ENCODE measurements at regions of chr3 and their contacts with region 1.

Region 1: DNA sequence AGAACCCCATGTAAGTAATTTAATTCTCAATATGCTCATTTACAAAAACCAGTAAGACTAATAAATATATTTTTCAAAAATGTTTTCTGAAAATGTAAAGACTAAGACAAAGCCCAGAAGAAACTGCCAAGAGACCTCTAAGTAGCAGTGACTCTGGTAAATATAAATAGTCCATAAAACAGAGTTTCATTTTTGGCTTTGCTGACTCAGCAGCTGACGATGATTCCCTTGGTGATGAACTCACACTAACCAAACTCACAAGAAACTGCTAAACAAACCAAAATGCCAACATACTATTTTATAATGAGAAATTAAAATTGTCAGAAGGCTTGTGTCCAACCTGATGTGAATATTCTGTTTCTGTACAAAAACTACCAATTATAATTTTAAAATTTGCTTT is 31.5 kb upstream of the IMPG2 start:
- DNase-seq: no peak
- H3K4me3 ChIP-seq: no peak overlapping the region
- H3K4me3 Mint-ChIP-seq: no peak overlapping the region
- H3K27ac ChIP-seq: no peak overlapping the region
- H3K27ac Mint-ChIP-seq: no peak overlapping the region
- H3K4me1 ChIP-seq: no peaks in the 10 kb centered on the region
- H3K4me1 Mint-ChIP-seq: peaks cover 0 to 5% (median under 1%) of the 10 kb centered on the region in 4 donors
- H3K27me3 ChIP-seq: no peaks in the 10 kb centered on the region
- H3K27me3 Mint-ChIP-seq: no peaks in the 10 kb centered on the region

Region 2: DNA sequence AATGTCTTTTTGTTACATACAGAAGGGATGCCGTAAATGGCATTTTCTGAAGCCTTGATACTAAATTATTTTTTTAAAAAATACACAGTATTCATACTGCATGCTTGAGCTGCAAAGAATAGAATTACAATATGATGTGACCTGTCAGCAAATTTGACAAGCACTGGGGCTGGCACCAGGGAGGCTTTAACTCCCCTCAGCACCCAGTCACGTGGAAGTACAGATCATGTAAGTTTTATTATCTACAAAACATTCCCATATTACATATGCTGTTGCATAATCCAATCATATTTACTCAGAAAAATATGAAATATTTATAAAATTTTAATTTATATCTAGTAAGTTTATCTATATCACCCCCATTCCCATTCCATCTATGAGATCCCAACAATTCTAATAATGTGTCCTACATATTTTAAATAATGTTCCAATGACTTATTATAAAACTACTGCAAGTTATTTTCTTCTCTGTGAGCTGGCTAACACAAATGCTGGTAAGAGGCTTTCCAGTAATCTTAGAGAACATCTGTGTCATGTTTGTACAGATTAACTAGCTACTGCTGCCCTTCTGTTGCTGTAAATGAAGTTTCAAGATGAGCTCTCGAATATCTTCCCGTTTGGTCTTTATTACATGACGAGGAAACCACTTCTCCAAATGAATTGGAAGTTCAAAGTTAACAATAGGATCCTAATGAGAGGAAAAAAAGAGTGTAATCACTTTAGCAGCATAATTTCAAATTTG is 26.3 kb before region 1 on chr3:
- CTCF ChIA-PET with region 1: no interaction called
- POLR2A ChIA-PET with region 1: no interaction called
- intact Hi-C with region 1: loop called (anchors 2 kb)
- DNase-seq: no peak
- H3K4me3 ChIP-seq: no peak overlapping the region
- H3K4me3 Mint-ChIP-seq: no peak overlapping the region
- H3K27ac ChIP-seq: no peak overlapping the region
- H3K27ac Mint-ChIP-seq: no peak overlapping the region
- H3K4me1 ChIP-seq: no peaks in the 10 kb centered on the region
- H3K4me1 Mint-ChIP-seq: no peaks in the 10 kb centered on the region
- H3K27me3 ChIP-seq: no peaks in the 10 kb centered on the region
- H3K27me3 Mint-ChIP-seq: no peaks in the 10 kb centered on the region